Calu3 (cell line): ENCODE measurements at regions of chr5 and their contacts with region 1.

Region 1: DNA sequence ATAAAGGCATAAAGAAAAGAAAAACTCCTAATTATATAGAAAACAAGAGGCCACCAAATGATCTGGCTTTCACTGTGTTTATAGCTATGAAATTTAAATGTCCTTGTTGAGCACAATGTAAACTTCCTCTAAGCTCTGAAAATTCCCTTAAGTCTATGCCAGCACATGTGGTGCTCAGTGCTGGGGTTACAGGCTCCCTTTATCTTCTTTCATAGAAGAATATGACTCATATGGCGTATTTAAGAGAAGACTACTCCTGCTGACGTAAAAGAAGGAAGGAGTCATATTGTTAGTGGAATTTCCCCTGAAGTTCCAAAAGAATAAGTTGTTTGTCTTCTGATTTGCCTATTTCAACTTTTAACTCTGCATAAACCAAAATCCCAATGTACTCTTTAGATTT is 30.4 kb downstream of the RNF145 start:
- DNase-seq: peak; percentile 67
- H3K4me3 Mint-ChIP-seq: peak overlapping the region; percentile 13
- H3K27ac Mint-ChIP-seq: peak overlapping the region; percentile 98
- H3K4me1 Mint-ChIP-seq: peaks cover 67% of the 10 kb centered on the region
- H3K27me3 Mint-ChIP-seq: no peaks in the 10 kb centered on the region
- CTCF ChIP-seq: no peak

Region 2: GRCh38 chr5:159262859-159263567 is 84.0 kb after region 1 on chr5 and contains the start of gene UBLCP1:
- CTCF ChIA-PET with region 1: no interaction called
- intact Hi-C with region 1: loop called (anchors 5 kb)
- DNase-seq: peak; percentile 84
- H3K4me3 Mint-ChIP-seq: peak within 1 kb of the TSS; percentile 84
- H3K27ac Mint-ChIP-seq: peak within 1 kb of the TSS; percentile 92
- H3K4me1 Mint-ChIP-seq: peaks cover 9% of the 10 kb centered on the region
- H3K27me3 Mint-ChIP-seq: no peaks in the 10 kb centered on the region
- CTCF ChIP-seq: no peak
- total RNA-seq, gene UBLCP1: 35.8 and 39.5 TPM in 2 replicates